Activated CD4-positive, alpha-beta T cell treated with anti-CD3 and anti-CD28 coated beads for 36 hours (primary cell): ENCODE measurements at regions of chr12 and their contacts with region 1.

Region 1: DNA sequence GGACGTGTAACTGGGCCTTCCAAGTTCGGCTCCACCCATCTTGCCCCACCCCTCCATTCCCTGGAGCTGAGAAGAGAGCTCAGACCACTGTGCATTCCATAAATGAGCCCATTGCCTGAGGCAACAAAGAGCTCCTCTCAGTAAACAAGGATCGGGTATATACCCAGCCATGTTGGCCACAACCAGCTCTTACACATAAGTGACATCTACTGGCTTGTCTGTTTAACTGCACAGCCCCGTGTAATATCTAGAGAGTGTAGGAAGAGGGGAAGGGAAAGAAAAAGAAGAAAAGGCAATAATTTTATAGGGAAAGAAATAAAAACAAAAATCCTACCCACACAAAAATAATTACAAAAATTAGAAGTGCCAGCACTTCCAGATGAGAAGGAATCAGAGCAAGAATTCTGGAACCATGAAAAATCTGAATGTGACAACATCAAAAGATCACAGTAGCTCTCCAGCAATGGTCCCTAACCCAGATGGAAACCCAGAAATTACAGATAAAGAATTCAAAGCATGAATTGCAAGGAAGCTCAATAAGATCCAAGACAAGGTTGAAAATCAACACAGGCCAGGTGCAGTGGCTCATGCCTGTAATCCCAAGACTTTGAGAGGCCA is 308.1 kb downstream of the RPAP3 start:
- DNase-seq: peak; percentile 64
- ATAC-seq: peak; percentile 62
- H3K4me3 Mint-ChIP-seq: no peak overlapping the region
- H3K27ac Mint-ChIP-seq: peak overlapping the region; percentile 100
- H3K4me1 Mint-ChIP-seq: peaks cover 96% of the 10 kb centered on the region
- H3K27me3 Mint-ChIP-seq: no peaks in the 10 kb centered on the region

Region 2: DNA sequence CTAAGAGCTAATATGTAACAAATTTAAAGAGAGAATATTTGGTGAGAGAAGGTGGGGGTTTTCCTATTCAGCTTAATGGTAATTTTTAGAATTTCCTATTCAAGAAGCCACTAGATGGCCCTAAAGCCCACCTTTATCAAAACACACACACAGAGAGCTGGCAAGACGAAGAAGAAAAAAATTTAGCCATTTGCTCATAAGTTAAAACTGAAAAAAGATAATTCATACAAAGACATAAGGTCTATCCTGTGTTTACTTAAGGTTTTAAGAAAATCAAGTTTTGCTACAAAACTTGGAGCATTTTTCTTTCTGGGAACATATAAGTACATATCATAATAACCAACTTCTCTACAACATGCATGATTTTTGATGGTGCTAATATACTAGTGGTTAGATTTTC is 365.1 kb before region 1 on chr12:
- CTCF ChIA-PET with region 1: interaction called, 47 read pairs
- POLR2A ChIA-PET with region 1: interaction called, 4 read pairs
- intact Hi-C with region 1: loop called (anchors 1 kb)
- DNase-seq: no peak
- ATAC-seq: peak; percentile 81
- H3K4me3 Mint-ChIP-seq: no peak overlapping the region
- H3K27ac Mint-ChIP-seq: peak overlapping the region; percentile 35
- H3K4me1 Mint-ChIP-seq: peaks cover 40% of the 10 kb centered on the region
- H3K27me3 Mint-ChIP-seq: no peaks in the 10 kb centered on the region

Region 3: GRCh38 chr12:47216150-47216677 is 181.6 kb before region 1 on chr12:
- CTCF ChIA-PET with region 1: interaction called, 32 read pairs
- POLR2A ChIA-PET with region 1: interaction called, 10 read pairs
- intact Hi-C with region 1: loop called (anchors 1 kb)
- DNase-seq: peak; percentile 81
- ATAC-seq: peak; percentile 43
- H3K4me3 Mint-ChIP-seq: peak overlapping the region; percentile 89
- H3K27ac Mint-ChIP-seq: peak overlapping the region; percentile 96
- H3K4me1 Mint-ChIP-seq: peaks cover 38% of the 10 kb centered on the region
- H3K27me3 Mint-ChIP-seq: no peaks in the 10 kb centered on the region

Region 4: GRCh38 chr12:47307680-47308399 is 89.9 kb before region 1 on chr12:
- CTCF ChIA-PET with region 1: interaction called, 12 read pairs
- POLR2A ChIA-PET with region 1: interaction called, 4 read pairs
- intact Hi-C with region 1: loop called (anchors 1 to 2 kb)
- DNase-seq: peak; percentile 73
- ATAC-seq: peak; percentile 84
- H3K4me3 Mint-ChIP-seq: peak overlapping the region; percentile 77
- H3K27ac Mint-ChIP-seq: peak overlapping the region; percentile 96
- H3K4me1 Mint-ChIP-seq: peaks cover 70% of the 10 kb centered on the region
- H3K27me3 Mint-ChIP-seq: no peaks in the 10 kb centered on the region

Region 5: GRCh38 chr12:47383942-47384341 is 13.8 kb before region 1 on chr12:
- CTCF ChIA-PET with region 1: interaction called, 15 read pairs
- POLR2A ChIA-PET with region 1: no interaction called
- intact Hi-C with region 1: no loop called
- DNase-seq: no peak
- ATAC-seq: peak; percentile 47
- H3K4me3 Mint-ChIP-seq: no peak overlapping the region
- H3K27ac Mint-ChIP-seq: peak overlapping the region; percentile 88
- H3K4me1 Mint-ChIP-seq: peaks cover 74% of the 10 kb centered on the region
- H3K27me3 Mint-ChIP-seq: no peaks in the 10 kb centered on the region

Region 6: DNA sequence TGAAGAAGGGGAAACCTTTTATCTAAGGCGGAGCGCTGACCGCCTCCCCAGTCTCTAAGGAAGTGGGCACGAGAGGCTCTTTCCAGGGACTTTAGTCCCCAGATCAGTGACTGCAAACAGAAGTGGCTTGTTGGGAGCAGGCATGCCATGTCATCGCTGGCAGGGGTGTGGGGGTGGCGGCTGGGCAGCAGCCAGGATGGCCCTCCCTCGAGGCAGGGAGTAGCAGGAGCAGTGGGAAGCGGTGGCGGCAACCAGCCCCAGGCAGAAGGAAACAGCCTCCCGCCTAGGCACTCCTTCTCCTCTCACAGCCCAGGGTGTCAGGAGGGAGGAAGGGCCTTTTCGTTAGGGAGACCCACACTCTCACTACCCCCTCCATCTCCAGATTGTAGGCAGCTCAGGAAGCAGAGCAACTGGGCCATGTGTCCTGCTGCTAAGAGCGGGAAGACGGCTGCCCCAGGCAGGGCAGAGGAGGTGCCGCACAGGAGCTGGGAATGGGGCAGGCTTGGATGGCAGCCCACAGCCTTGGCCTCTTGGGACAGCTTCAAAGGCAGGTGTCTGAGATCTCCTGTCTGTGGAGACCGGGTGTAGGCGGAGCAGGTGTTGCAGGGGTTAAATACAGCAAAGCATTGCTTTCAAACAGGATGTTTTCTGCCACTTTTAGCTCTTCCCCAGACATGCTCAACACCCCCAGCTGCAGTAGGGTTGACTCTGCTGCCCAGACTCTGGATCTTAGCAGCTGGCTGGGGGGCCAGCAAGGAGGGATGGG is 485.2 kb after region 1 on chr12:
- CTCF ChIA-PET with region 1: no interaction called
- POLR2A ChIA-PET with region 1: no interaction called
- intact Hi-C with region 1: loop called in 1 of 2 experiments (anchors 10 kb)
- DNase-seq: peak; percentile 70
- ATAC-seq: peak; percentile 14
- H3K4me3 Mint-ChIP-seq: peak overlapping the region; percentile 78
- H3K27ac Mint-ChIP-seq: peak overlapping the region; percentile 97
- H3K4me1 Mint-ChIP-seq: peaks cover 81% of the 10 kb centered on the region
- H3K27me3 Mint-ChIP-seq: no peaks in the 10 kb centered on the region

Region 7: GRCh38 chr12:48765753-48766162 is 1368.0 kb after region 1 on chr12:
- CTCF ChIA-PET with region 1: no interaction called
- POLR2A ChIA-PET with region 1: no interaction called
- intact Hi-C with region 1: no loop called
- DNase-seq: peak; percentile 53
- ATAC-seq: peak; percentile 84
- H3K4me3 Mint-ChIP-seq: no peak overlapping the region
- H3K27ac Mint-ChIP-seq: no peak overlapping the region
- H3K4me1 Mint-ChIP-seq: peaks cover 7% of the 10 kb centered on the region
- H3K27me3 Mint-ChIP-seq: peaks cover 2% of the 10 kb centered on the region